K562 (cell line): ENCODE measurements at regions of chr18 and their contacts with region 1.

Region 1: DNA sequence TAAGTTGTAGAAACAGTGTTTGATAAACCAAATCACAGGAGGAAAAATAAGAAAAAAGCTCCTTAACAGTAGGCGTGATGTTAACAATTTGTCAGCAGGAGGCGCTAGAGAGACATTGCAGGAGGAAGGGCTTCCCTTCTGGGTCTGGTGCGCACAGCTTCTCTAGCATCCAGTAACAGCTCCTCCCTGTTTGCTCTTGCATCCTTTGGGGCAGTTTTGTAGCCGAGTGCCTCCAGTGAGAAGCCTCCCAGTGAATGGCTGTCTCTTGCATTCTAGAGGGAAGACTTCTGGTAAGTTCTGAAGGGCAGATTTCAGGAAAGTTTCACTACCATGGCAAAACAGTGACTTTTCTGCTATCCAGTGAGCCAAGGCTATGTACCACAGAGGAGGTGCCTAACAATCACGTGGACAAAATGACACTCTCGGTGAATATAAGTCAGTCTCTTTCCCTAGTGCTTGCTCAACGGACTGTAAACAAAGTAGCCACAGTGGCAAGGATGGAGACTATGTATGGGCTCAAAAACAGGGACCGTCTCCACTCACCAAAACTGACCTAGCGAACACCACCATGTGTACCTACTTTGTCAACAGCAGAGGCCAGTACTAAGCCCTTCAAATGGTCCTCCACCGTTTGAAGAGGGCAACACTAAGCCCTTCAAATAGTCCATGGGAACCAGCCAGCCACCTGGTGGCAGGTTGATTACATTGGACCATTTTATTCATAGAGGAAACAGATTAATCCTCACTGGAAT is 9.6 kb upstream of the ZNF396 start:
- DNase-seq: peak; percentile 77 to 86 (median 78)
- ATAC-seq: peak; percentile 94
- H3K4me3 ChIP-seq: no peak overlapping the region
- H3K27ac ChIP-seq: no peak overlapping the region
- H3K4me1 ChIP-seq: no peaks in the 10 kb centered on the region
- H3K27me3 ChIP-seq: no peaks in the 10 kb centered on the region
- CTCF ChIP-seq: peak; percentile 82 to 98 (median 93)
- EP300 ChIP-seq: no peak
- POLR2A ChIP-seq: no peak
- RAD21 ChIP-seq: peak; percentile 83 to 89

Region 2: DNA sequence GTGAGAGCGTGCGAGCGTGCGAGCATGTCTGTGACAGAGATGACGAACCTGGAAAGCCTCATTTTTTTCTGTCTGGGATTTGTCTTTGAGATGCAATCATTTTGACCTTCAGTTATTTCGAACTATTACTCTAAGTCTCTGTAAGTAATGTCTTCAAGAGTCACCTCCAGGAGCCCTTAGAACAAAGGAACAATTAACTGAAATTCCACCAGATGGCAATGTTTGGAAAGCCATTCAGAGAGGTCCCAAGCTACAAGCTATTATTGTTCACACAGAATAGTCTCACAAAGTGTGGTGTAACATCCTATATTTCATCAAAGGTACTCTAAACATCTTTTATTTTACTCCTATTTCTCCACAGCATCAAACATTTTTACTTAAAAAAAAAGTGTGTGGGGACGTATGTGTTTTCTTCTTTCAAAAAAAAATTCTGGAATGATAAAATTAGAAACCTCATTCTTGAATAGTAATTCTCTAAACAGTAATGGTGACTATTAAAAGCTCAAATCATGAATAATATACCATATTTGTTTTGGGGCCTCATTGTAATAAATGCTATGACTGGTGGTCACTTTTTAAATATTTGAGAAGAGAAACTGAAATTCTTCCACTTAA is 380.7 kb before region 1 on chr18:
- CTCF ChIA-PET with region 1: interaction called, 3 read pairs
- POLR2A ChIA-PET with region 1: no interaction called
- in situ Hi-C with region 1: no loop called
- intact Hi-C with region 1: loop called (anchors 5 kb)
- DNase-seq: peak; percentile 20 to 80 (median 46)
- ATAC-seq: peak; percentile 98
- H3K4me3 ChIP-seq: no peak overlapping the region
- H3K27ac ChIP-seq: no peak overlapping the region
- H3K4me1 ChIP-seq: no peaks in the 10 kb centered on the region; a peak in 1 of 5 replicates
- H3K27me3 ChIP-seq: peaks cover 0 to 6% of the 10 kb centered on the region in 2 experiments; a peak in 1 of 5 replicates
- CTCF ChIP-seq: peak; percentile 62 to 85 (median 69); a peak in 5 of 6 replicates
- EP300 ChIP-seq: no peak
- POLR2A ChIP-seq: no peak
- RAD21 ChIP-seq: peak; percentile 94 to 97

Region 3: GRCh38 chr18:35949903-35950627 is 563.3 kb after region 1 on chr18:
- CTCF ChIA-PET with region 1: interaction called, 8 read pairs
- POLR2A ChIA-PET with region 1: no interaction called
- in situ Hi-C with region 1: loop called (anchors 10 kb)
- intact Hi-C with region 1: loop called (anchors 10 kb)
- DNase-seq: peak; percentile 60 to 70 (median 66)
- ATAC-seq: peak; percentile 89
- H3K4me3 ChIP-seq: no peak overlapping the region
- H3K27ac ChIP-seq: no peak overlapping the region
- H3K4me1 ChIP-seq: peaks cover 0 to 7% of the 10 kb centered on the region in 2 experiments; a peak in 2 of 5 replicates
- H3K27me3 ChIP-seq: peaks cover 0 to 12% of the 10 kb centered on the region in 2 experiments; a peak in 4 of 5 replicates
- CTCF ChIP-seq: peak; percentile 72 to 90 (median 72)
- EP300 ChIP-seq: no peak
- POLR2A ChIP-seq: no peak
- RAD21 ChIP-seq: peak; percentile 46 to 74